Naive thymus-derived CD4-positive, alpha-beta T cell (primary cell): ENCODE measurements at regions of chr20 and their contacts with region 1.

Region 1: DNA sequence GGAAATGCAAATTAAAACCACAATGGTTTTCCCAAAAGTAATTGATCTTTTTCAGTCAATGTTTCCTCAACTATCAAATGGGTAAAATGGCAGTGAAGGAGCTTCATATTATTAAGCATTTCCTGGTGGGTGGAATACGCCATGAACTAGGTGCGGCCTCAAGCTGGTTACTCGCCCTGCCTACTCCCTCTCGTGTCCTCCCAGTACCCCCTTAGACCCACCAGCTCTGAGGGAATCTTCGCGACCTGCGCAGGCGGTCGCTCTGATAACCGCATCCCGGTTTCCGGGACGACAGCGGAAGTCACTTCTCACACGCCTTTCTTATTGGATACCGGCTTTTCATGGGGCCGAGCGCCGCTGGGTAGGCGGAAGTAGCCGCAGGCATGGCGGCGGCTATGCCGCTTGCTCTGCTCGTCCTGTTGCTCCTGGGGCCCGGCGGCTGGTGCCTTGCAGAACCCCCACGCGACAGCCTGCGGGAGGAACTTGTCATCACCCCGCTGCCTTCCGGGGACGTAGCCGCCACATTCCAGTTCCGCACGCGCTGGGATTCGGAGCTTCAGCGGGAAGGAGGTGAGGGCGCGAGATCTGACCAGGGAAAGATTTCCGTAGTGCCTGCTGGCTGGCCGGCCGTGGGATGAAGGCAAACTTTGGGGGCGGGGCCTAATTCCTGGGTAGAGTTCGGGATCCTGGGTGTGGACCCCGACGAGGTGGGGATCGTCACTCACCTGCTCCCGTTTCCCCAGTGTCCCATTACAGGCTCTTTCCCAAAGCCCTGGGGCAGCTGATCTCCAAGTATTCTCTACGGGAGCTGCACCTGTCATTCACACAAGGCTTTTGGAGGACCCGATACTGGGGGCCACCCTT is at the start of gene PIGT:
- DNase-seq: peak; percentile 71 to 94 (median 93)
- ATAC-seq: peak; percentile 98
- H3K4me3 ChIP-seq: peak within 1 kb of the TSS; percentile 98
- H3K4me3 Mint-ChIP-seq: peak within 1 kb of the TSS; percentile 91 to 97 (median 94)
- H3K27ac ChIP-seq: peak within 1 kb of the TSS; percentile 95
- H3K27ac Mint-ChIP-seq: peak within 1 kb of the TSS; percentile 94 to 99 (median 97)
- H3K4me1 ChIP-seq: peaks cover 12 to 21% of the 10 kb centered on the region in 2 donors
- H3K4me1 Mint-ChIP-seq: peaks cover 17 to 50% (median 32%) of the 10 kb centered on the region in 7 donors
- H3K27me3 ChIP-seq: no peaks in the 10 kb centered on the region
- H3K27me3 Mint-ChIP-seq: no peaks in the 10 kb centered on the region
- total RNA-seq, gene PIGT: 78.7 to 140 (median 85.0) TPM

Region 2: GRCh38 chr20:43456809-43457639 is 1959.0 kb before region 1 on chr20:
- CTCF ChIA-PET with region 1: no interaction called
- POLR2A ChIA-PET with region 1: no interaction called
- intact Hi-C with region 1: loop called in 1 of 2 experiments (anchors 5 kb)
- DNase-seq: peak in 7 of 9 donors; percentile 73 to 92 (median 91)
- ATAC-seq: peak; percentile 82
- H3K4me3 ChIP-seq: peak overlapping the region; percentile 86
- H3K4me3 Mint-ChIP-seq: peak overlapping the region; percentile 79 to 100 (median 94)
- H3K27ac ChIP-seq: peak overlapping the region; percentile 100
- H3K27ac Mint-ChIP-seq: peak overlapping the region; percentile 96 to 100 (median 99)
- H3K4me1 ChIP-seq: peaks cover 10 to 29% of the 10 kb centered on the region in 2 donors
- H3K4me1 Mint-ChIP-seq: peaks cover 24 to 42% (median 35%) of the 10 kb centered on the region in 7 donors
- H3K27me3 ChIP-seq: no peaks in the 10 kb centered on the region
- H3K27me3 Mint-ChIP-seq: peaks cover 0 to 14% (median 4%) of the 10 kb centered on the region in 5 donors

Region 3: GRCh38 chr20:45368221-45368980 is 47.6 kb before region 1 on chr20:
- CTCF ChIA-PET with region 1: interaction called, 18 read pairs
- POLR2A ChIA-PET with region 1: interaction called, 67 read pairs
- intact Hi-C with region 1: loop called (anchors 1 kb)
- DNase-seq: peak in 7 of 9 donors; percentile 37 to 60 (median 54)
- ATAC-seq: peak; percentile 60
- H3K4me3 ChIP-seq: no peak overlapping the region
- H3K4me3 Mint-ChIP-seq: peak overlapping the region; percentile 27 to 83 (median 60)
- H3K27ac ChIP-seq: peak overlapping the region; percentile 43
- H3K27ac Mint-ChIP-seq: peak overlapping the region; percentile 51 to 90 (median 79)
- H3K4me1 ChIP-seq: peaks cover 47 to 56% of the 10 kb centered on the region in 2 donors
- H3K4me1 Mint-ChIP-seq: peaks cover 47 to 84% (median 77%) of the 10 kb centered on the region in 7 donors
- H3K27me3 ChIP-seq: no peaks in the 10 kb centered on the region
- H3K27me3 Mint-ChIP-seq: no peaks in the 10 kb centered on the region

Region 4: GRCh38 chr20:45427236-45428149 is 11.5 kb after region 1 on chr20:
- CTCF ChIA-PET with region 1: interaction called, 3 read pairs
- POLR2A ChIA-PET with region 1: interaction called, 14 read pairs
- intact Hi-C with region 1: no loop called
- DNase-seq: no peak
- ATAC-seq: peak; percentile 17
- H3K4me3 ChIP-seq: no peak overlapping the region
- H3K4me3 Mint-ChIP-seq: no peak overlapping the region
- H3K27ac ChIP-seq: no peak overlapping the region
- H3K27ac Mint-ChIP-seq: peak overlapping the region in 2 of 9 donors; percentile 7 to 20
- H3K4me1 ChIP-seq: no peaks in the 10 kb centered on the region
- H3K4me1 Mint-ChIP-seq: peaks cover 0 to 11% (median 4%) of the 10 kb centered on the region in 7 donors
- H3K27me3 ChIP-seq: no peaks in the 10 kb centered on the region
- H3K27me3 Mint-ChIP-seq: no peaks in the 10 kb centered on the region

Region 5: GRCh38 chr20:45792332-45792686 is 376.3 kb after region 1 on chr20:
- CTCF ChIA-PET with region 1: no interaction called
- POLR2A ChIA-PET with region 1: no interaction called
- intact Hi-C with region 1: loop called in 1 of 2 experiments (anchors 2 kb)
- DNase-seq: peak in 1 of 9 donors; percentile 9
- ATAC-seq: peak; percentile 39
- H3K4me3 ChIP-seq: peak overlapping the region; percentile 70
- H3K4me3 Mint-ChIP-seq: peak overlapping the region; percentile 85 to 99 (median 92)
- H3K27ac ChIP-seq: peak overlapping the region; percentile 96
- H3K27ac Mint-ChIP-seq: peak overlapping the region; percentile 87 to 99 (median 93)
- H3K4me1 ChIP-seq: peaks cover 5 to 10% of the 10 kb centered on the region in 2 donors
- H3K4me1 Mint-ChIP-seq: peaks cover 13 to 28% (median 20%) of the 10 kb centered on the region in 7 donors
- H3K27me3 ChIP-seq: no peaks in the 10 kb centered on the region
- H3K27me3 Mint-ChIP-seq: peaks cover 0 to 5% (median 0%) of the 10 kb centered on the region in 5 donors